GM10248 (cell line): ENCODE measurements at regions of chr16 and their contacts with region 1.

Region 1: GRCh38 chr16:53159781-53160436 is 105.1 kb downstream of the CHD9 start:
- DNase-seq: peak; percentile 47
- CTCF ChIP-seq: peak; percentile 49

Region 2: DNA sequence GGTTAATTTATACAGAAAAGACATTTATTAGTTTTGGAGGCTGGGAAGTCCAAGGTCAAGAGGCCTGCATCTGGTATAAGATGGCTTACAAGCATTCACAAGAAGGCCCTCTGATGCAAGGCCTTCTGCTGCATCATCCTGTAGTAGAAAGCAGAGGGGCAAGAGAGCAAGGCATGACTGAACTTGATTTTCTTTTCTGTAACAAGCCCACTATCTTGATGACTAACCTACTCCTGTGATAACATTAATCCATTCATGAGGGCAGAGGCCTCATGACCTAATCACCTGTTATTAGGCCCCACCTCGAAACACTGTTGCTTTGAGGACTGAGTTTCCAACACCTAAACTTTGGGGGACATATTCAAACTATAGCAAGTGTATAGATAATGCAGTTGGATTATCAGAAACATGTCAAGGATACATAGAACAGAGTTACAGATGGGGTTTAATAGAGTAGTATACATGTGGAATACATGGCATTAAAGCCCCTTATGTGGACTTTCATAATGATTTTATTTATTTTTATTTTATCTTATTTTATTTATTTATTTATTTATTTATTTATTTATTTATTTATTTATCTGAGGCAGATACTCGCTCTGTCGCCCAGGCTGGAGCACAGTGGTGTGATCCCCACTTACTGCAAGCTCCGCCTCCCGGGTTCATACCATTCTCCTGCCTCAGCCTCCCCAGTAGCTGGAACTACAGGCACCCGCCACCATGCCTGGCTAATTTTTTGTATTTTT is 16.9 kb before region 1 on chr16:
- CTCF ChIA-PET with region 1: interaction called, 30 read pairs
- POLR2A ChIA-PET with region 1: no interaction called
- DNase-seq: no peak
- CTCF ChIP-seq: no peak

Region 3: DNA sequence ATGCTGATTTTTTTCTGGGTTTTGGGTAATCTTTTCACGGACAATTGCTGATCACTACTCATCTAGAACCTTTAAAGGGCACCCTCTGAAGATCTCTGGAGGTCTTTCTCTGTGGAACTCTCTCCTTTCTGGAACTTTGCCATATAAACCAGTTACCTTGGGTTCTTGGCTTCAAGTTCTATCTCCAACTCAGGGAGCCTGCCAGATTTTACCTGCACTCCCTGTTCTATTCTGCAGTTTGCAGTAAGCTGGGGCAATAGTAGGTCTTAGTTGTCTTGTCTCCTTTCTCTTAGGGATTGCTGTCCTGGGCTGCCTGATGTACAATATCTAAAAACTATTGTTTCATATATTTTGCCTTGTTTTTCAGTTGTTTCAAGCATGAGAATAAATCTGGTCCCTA is 15.2 kb after region 1 on chr16:
- CTCF ChIA-PET with region 1: interaction called, 14 read pairs
- POLR2A ChIA-PET with region 1: no interaction called
- DNase-seq: no peak
- CTCF ChIP-seq: no peak